Endothelial cell of umbilical vein (primary cell): ENCODE measurements at regions of chr5 and their contacts with region 1.

Region 1: DNA sequence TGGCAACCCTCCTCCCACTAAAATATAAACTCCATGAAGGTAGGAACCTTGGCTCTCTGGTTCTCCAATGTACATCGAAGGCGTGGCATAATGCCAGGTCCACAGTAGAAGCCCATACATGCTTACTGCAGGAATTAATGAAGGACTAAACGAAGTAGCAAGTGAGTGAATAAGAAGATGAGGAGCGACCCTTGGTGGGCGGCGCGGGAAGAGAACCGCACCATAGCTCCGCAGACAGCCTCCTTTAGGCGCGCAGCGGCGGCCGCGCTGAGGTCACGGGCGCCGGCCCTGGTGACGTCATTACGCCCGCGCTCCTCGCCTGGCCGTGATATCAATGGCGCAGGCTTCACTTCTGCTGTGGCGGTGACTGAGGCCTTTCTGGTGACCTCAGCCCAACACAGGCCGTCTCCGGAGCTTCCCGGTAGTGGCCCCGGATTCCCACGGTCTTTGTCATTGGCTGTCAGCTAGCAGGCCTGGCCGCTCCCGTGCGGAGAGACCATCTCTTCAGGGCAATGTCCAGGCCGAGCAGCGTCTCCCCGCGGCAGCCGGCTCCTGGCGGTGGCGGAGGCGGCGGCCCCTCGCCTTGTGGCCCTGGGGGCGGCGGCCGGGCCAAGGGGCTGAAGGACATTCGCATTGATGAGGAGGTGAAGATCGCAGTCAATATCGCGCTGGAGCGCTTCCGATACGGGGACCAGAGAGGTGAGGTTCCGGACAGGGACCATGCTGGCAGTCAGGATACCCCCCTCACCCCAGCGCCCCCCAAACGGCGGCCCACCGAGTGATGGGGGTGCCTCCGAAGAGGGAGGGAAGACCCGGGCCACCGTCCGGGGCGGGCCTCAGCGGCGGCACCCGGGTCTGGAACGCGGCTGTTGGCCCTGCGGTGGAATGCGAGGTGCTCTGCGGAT is at the start of gene YTHDC2:
- DNase-seq: peak; percentile 90
- H3K4me3 ChIP-seq: peak within 1 kb of the TSS; percentile 72 to 91 (median 87)
- H3K27ac ChIP-seq: peak within 1 kb of the TSS; percentile 70
- H3K4me1 ChIP-seq: peaks cover 15% of the 10 kb centered on the region
- H3K27me3 ChIP-seq: peaks cover 2 to 12% of the 10 kb centered on the region in 2 experiments
- CTCF ChIP-seq: peak; percentile 9 to 34
- POLR2A ChIP-seq: peak; percentile 92
- total RNA-seq, gene YTHDC2: 33.2 and 40.7 TPM in 2 replicates

Region 2: DNA sequence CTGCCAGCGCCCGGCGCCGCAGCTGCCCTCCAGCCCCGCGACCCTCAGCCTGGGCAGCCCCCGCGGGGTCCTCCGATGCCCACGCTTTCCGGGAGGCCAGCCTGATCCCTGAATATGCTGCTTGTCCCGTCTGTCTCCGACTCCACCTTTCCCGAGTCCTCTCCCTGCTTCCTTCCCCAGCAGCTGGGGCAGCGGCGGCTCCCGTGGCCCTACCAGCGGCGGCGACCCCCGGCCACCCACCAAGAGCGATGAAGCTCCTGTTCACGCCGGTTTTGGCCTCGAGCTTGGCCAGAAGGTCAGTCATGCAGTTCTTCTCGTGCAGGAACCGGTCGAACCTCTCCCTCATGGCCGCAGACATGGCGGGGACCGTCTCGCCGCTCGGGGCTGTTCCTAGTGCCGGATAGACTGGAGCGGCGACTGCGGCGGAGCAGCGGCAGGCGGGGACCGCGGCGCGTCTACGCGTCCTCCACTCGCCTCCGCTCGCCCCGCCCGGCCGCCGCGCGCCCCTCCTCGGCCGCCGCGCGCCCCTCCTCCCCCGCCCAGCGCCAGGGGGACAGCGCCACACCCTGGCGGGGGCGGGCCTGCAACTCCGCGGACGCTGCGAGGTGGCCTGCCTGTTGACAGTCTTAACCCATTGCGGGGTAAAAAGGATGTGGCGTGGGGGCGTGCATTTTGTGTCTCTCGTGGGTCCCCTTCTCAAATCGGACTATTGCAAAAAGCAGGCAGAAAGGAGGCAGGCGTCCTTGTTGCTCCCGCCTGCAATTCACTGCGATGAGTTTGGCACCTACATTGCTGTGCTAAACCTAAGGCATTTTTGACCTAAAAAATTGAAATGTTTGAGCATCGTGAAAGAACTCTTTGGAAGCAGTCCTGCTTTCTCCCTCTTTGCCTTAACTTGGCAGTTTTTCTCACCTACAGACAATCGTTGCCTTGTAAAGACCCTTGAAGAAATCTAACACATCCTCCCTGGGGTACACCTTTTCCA is 591.5 kb before region 1 on chr5 and contains the start of gene REEP5:
- CTCF ChIA-PET with region 1: no interaction called
- POLR2A ChIA-PET with region 1: no interaction called
- dilution Hi-C with region 1: no loop called
- intact Hi-C with region 1: loop called (anchors 5 kb)
- DNase-seq: peak; percentile 83
- H3K4me3 ChIP-seq: peak within 1 kb of the TSS; percentile 53 to 99 (median 78)
- H3K27ac ChIP-seq: peak within 1 kb of the TSS; percentile 66
- H3K4me1 ChIP-seq: peaks cover 8% of the 10 kb centered on the region
- H3K27me3 ChIP-seq: no peaks in the 10 kb centered on the region
- CTCF ChIP-seq: peak; percentile 74 to 80
- POLR2A ChIP-seq: peak; percentile 89
- total RNA-seq, gene REEP5: 84.5 and 98.0 TPM in 2 replicates

Region 3: DNA sequence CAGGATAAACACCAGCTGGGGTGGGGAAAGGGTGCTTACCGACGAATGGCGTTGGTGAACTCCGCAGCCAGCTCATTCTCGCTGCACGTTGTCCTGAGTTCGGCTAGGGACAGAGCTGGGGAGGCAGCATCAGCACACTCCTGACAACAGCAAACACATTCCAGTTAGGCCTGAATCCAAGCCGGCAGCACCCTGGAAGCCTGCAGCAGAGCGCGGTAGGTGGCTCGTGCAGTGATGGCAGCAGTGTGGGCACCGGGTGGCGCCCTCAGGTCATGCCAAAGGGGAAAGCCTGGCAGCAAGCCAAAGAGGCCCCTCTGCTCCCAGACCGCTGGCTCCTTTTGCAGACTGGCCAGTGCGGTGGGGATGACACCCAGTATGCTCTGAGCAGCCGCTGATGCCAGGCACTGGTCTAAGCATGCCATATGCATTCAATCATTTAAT is 470.1 kb before region 1 on chr5:
- CTCF ChIA-PET with region 1: interaction called, 3 read pairs
- POLR2A ChIA-PET with region 1: no interaction called
- dilution Hi-C with region 1: no loop called
- intact Hi-C with region 1: loop called (anchors 2 kb)
- DNase-seq: peak; percentile 17
- H3K4me3 ChIP-seq: no peak overlapping the region
- H3K27ac ChIP-seq: no peak overlapping the region
- H3K4me1 ChIP-seq: peaks cover 4% of the 10 kb centered on the region
- H3K27me3 ChIP-seq: no peaks in the 10 kb centered on the region
- CTCF ChIP-seq: peak; percentile 19 to 20
- POLR2A ChIP-seq: no peak

Region 4: DNA sequence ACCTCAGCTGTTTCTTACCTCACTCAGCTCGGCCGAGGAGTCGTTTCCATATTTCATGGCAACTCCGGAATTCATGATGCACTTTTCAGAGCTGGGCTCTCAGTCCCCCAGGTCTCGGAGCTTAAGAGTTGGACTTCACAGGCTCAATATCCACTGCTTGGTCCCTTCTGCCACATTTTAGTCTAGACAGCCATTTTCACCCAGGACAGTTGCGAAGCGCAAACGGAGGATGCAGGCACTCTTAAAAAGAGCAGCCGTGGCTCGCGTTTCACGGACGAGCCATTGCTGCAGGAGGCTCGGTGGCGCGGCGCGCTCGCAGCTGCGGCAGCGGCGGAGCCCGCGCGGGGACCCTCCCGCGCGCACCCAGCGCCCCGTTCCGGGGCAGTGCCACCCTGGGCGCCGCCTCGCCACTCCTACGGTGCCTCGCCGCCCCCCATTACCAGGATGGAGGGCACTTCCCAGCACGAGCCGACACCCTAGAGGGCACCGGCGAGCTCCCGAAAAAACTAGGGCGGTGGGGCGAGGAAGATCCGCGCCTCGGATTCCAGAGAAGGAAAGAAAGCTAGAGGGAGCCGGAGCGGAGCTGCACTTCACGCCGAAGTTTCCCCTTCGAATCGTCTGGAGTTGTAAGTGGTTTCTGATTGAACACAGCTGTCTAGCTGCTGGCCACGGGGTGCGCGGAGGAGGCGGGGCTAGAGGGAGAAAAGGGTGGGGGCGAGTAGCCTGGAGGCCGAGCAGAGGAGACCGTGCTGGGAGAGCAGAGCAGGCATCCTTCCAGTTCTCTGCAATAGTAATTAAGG is 219.1 kb before region 1 on chr5:
- CTCF ChIA-PET with region 1: interaction called, 9 read pairs
- POLR2A ChIA-PET with region 1: no interaction called
- dilution Hi-C with region 1: no loop called
- intact Hi-C with region 1: loop called (anchors 2 kb)
- DNase-seq: peak; percentile 92
- H3K4me3 ChIP-seq: peak overlapping the region; percentile 52 to 86 (median 54)
- H3K27ac ChIP-seq: peak overlapping the region; percentile 65
- H3K4me1 ChIP-seq: peaks cover 31% of the 10 kb centered on the region
- H3K27me3 ChIP-seq: no peaks in the 10 kb centered on the region
- CTCF ChIP-seq: peak in 1 of 2 donors; percentile 24
- POLR2A ChIP-seq: peak; percentile 77

Region 5: DNA sequence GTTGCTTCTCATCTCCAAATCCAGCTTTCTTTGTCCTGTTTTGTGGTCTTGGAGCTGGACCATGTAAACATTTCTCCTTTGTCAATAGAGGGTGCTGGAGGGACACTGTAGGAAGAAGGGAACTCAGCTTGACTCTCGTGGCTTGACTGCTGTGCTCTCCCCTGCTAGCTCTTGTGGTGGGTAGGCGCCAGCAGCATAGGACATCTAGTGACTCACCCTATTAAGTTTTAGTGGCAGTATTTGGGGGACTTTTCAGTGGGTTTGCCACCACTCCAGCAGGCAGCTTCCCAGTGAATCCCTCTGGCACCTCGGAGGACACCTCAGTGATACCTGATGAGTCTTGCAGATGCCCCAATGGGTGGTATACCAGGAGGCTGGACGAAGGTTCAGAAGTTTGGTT is 176.7 kb before region 1 on chr5:
- CTCF ChIA-PET with region 1: interaction called, 263 read pairs
- POLR2A ChIA-PET with region 1: interaction called, 4 read pairs
- dilution Hi-C with region 1: no loop called
- intact Hi-C with region 1: loop called (anchors 1 kb)
- DNase-seq: peak; percentile 78
- H3K4me3 ChIP-seq: no peak overlapping the region
- H3K27ac ChIP-seq: no peak overlapping the region
- H3K4me1 ChIP-seq: peaks cover 8% of the 10 kb centered on the region
- H3K27me3 ChIP-seq: no peaks in the 10 kb centered on the region
- CTCF ChIP-seq: peak; percentile 51 to 59
- POLR2A ChIP-seq: no peak

Region 6: DNA sequence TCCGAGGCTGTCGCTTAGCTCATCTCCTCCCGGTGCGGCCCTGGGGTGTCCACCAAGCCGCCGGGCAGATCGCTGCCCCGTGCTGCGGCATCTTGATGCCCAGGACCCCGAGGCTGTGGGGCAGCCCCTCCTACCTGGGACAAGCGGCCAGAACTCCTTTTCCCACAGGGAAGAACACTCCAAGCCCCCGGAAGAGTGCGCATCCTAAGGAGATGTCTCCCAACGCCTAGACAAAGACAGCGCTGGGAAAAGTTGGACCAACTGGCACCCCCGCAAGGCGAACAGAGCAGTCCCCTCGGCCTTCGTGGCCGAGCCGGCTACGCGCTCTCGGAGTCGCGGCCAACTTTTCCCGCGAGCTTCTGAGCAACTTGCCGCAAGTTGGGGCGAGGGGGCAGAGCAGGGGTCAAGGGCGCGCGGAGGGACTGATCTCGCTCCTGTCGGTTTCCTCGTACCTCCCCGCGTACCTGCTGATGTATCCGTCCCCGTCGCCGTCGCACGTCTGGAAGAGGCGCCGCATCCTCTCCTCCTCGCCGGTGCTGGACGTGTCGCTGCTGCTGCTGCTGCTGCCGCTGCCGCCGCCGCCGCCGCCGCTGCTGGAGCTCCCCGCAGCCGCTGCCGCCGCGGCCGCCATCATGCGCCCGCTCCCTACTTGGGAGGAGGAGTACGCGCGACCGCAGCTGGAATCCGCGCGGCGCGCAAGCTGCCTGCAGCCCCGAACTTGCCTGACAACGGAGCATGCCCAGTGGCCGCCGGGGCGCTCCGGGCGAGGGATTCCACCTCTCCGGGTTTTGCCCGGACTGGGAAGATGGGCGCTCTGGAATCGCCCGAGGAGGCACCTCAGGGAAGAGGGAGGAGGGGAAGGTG is 25.6 kb before region 1 on chr5 and contains the start of gene MCC:
- CTCF ChIA-PET with region 1: interaction called, 13 read pairs
- POLR2A ChIA-PET with region 1: no interaction called
- dilution Hi-C with region 1: no loop called
- intact Hi-C with region 1: loop called (anchors 2 kb)
- DNase-seq: peak; percentile 73
- H3K4me3 ChIP-seq: peak within 1 kb of the TSS; percentile 10 to 69 (median 47)
- H3K27ac ChIP-seq: no peak within 1 kb of the TSS
- H3K4me1 ChIP-seq: peaks cover 18% of the 10 kb centered on the region
- H3K27me3 ChIP-seq: peaks cover 22 to 31% of the 10 kb centered on the region in 2 experiments
- CTCF ChIP-seq: no peak
- POLR2A ChIP-seq: no peak
- total RNA-seq, gene MCC: 23.0 and 27.5 TPM in 2 replicates

Region 7: GRCh38 chr5:113502073-113502472 is 11.6 kb before region 1 on chr5:
- CTCF ChIA-PET with region 1: interaction called, 14 read pairs
- POLR2A ChIA-PET with region 1: no interaction called
- dilution Hi-C with region 1: no loop called
- intact Hi-C with region 1: no loop called
- DNase-seq: no peak
- H3K4me3 ChIP-seq: no peak overlapping the region
- H3K27ac ChIP-seq: no peak overlapping the region
- H3K4me1 ChIP-seq: no peaks in the 10 kb centered on the region
- H3K27me3 ChIP-seq: peaks cover 11 to 12% of the 10 kb centered on the region in 2 experiments
- CTCF ChIP-seq: no peak
- POLR2A ChIP-seq: no peak